ENCODE measurements at regions of chr17 and their contacts with region 1.

Region 1: DNA sequence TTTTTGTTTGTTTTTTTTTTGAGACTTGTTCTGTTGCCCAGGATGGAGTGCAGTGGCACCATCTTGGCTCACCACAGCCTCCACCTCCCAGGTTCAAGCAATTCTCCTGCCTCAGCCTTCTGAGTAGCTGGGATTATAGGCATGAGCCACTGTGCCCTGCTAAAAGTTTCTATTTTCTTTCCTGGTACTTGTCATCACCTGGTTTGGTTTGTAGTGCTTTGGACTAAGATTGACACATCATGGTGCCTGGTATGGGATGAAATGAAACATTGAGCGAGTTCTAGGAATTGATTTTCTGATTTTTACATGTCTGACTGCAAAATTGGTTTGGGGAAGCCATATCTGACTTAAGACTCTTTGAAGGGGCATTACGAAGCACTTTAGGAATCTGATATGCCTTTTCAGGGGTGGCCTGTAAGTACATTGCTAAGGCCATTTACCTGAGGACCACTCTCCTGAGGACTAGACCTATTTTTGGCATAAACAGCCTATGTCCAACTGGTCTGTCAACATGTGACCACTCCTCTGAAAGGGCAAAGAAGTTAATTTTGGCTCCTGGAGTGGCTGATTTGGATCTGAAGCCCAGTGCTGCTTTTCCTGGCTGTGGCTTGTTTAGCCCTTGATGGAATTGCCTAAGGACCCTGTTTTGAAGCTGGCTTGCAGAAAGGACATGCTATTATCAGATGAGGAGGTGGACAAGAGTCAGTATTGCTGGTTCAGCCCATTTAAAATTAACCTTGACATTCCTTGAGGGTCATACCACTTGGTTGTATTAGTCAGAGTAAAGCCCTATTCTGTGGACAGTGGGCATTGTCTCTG is 18.4 kb upstream of the TBKBP1 start:
- DNase-seq: no peak
- ATAC-seq: no peak
- H3K4me3 Mint-ChIP-seq: no peak overlapping the region
- H3K27ac Mint-ChIP-seq: no peak overlapping the region
- H3K4me1 Mint-ChIP-seq: peaks cover 36% of the 10 kb centered on the region
- H3K27me3 Mint-ChIP-seq: no peaks in the 10 kb centered on the region

Region 2: GRCh38 chr17:47633996-47634395 is 41.6 kb before region 1 on chr17:
- CTCF ChIA-PET with region 1: no interaction called
- DNase-seq: no peak
- ATAC-seq: no peak
- H3K4me3 Mint-ChIP-seq: no peak overlapping the region
- H3K27ac Mint-ChIP-seq: no peak overlapping the region
- H3K4me1 Mint-ChIP-seq: peaks cover 17% of the 10 kb centered on the region
- H3K27me3 Mint-ChIP-seq: no peaks in the 10 kb centered on the region

Region 3: GRCh38 chr17:47687748-47688147 is 12.2 kb after region 1 on chr17:
- CTCF ChIA-PET with region 1: interaction called, 11 read pairs
- DNase-seq: no peak
- ATAC-seq: no peak
- H3K4me3 Mint-ChIP-seq: no peak overlapping the region
- H3K27ac Mint-ChIP-seq: no peak overlapping the region
- H3K4me1 Mint-ChIP-seq: peaks cover 21% of the 10 kb centered on the region
- H3K27me3 Mint-ChIP-seq: peaks cover 3% of the 10 kb centered on the region